MCF 10A (cell line): ENCODE measurements at regions of chr16 and their contacts with region 1.

Region 1: DNA sequence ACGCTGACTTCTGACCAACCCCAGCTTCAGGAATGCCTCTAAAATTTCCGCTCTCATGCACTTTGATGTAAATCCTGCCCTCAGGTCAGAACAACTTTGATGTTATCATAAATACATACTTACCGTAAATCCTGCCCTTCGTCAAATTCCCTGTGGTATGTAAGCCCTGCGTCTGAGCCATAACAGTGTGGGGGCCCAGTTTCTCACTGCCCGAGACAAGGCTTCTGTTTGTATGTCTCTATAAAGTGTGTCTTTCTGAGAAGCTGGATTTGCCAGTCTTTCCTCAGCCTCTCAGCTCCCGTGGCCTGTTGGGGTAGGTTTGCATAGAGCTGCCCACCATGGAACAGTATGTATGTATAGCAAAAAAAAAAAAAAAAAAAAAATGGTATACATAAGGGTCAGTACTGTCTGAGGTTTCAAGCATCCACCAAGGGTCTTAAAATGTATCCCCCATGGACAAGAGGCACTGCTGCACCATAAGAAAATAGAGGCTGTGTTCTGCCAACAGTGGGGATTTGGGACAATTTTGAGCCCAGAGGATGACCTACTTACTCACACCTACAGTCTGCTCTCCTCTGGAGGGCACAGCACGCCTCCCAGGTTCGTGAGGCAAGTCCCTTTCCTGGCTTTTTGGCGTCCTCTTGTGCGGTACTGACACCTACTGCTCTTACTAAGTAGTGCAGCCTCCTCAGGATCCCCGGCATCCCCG is 17.5 kb downstream of the PRMT7 start:
- DNase-seq: peak; percentile 88
- H3K4me3 Mint-ChIP-seq: no peak overlapping the region
- H3K27ac Mint-ChIP-seq: no peak overlapping the region
- H3K4me1 Mint-ChIP-seq: peaks cover 10% of the 10 kb centered on the region
- H3K27me3 Mint-ChIP-seq: no peaks in the 10 kb centered on the region
- CTCF ChIP-seq: peak; percentile 91

Region 2: GRCh38 chr16:68244903-68245853 is 83.1 kb before region 1 on chr16 and contains the start of gene PLA2G15:
- CTCF ChIA-PET with region 1: interaction called, 36 read pairs
- POLR2A ChIA-PET with region 1: no interaction called
- intact Hi-C with region 1: loop called (anchors 1 kb)
- DNase-seq: peak; percentile 93
- H3K4me3 Mint-ChIP-seq: peak within 1 kb of the TSS; percentile 83
- H3K27ac Mint-ChIP-seq: peak within 1 kb of the TSS; percentile 16
- H3K4me1 Mint-ChIP-seq: peaks cover 9% of the 10 kb centered on the region
- H3K27me3 Mint-ChIP-seq: no peaks in the 10 kb centered on the region
- CTCF ChIP-seq: no peak
- total RNA-seq, gene PLA2G15: 4.6 and 6.4 TPM in 2 replicates

Region 3: GRCh38 chr16:68251832-68252231 is 76.5 kb before region 1 on chr16:
- CTCF ChIA-PET with region 1: interaction called, 11 read pairs
- POLR2A ChIA-PET with region 1: no interaction called
- intact Hi-C with region 1: no loop called
- DNase-seq: no peak
- H3K4me3 Mint-ChIP-seq: no peak overlapping the region
- H3K27ac Mint-ChIP-seq: no peak overlapping the region
- H3K4me1 Mint-ChIP-seq: peaks cover under 1% of the 10 kb centered on the region
- H3K27me3 Mint-ChIP-seq: no peaks in the 10 kb centered on the region
- CTCF ChIP-seq: no peak

Region 4: GRCh38 chr16:68257906-68258800 is 70.2 kb before region 1 on chr16:
- CTCF ChIA-PET with region 1: interaction called, 308 read pairs
- POLR2A ChIA-PET with region 1: interaction called, 21 read pairs
- intact Hi-C with region 1: loop called (anchors 1 kb)
- DNase-seq: peak; percentile 67
- H3K4me3 Mint-ChIP-seq: no peak overlapping the region
- H3K27ac Mint-ChIP-seq: peak overlapping the region; percentile 14
- H3K4me1 Mint-ChIP-seq: peaks cover 10% of the 10 kb centered on the region
- H3K27me3 Mint-ChIP-seq: no peaks in the 10 kb centered on the region
- CTCF ChIP-seq: no peak

Region 5: DNA sequence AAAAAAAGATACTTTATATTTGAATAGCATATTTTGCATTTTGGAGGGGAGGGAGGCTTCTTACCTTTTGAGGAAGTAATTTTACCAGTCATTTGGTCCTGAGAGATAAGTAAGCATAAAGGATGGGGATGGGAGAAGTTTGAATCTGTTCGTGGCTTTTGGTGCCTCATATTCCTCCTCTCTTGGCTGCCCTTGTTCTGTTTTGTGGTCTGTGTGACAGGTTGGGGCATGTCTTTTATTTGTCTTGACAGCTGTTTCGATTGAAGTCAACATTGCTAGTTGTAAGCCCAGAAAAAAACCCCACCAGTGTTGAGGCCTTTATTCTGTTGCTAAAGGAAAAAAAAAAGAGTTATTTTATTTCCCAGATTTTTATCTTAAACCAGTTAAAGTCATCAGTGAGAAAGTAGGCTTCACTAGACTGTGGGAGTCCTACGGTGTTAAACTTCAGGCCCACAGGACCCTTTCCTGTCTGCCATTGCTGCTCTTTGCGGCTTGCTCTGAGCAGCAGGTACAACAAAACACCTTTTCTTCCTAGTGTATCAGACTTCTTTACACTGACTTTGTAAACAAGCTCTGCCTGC is 52.6 kb before region 1 on chr16:
- CTCF ChIA-PET with region 1: interaction called, 12 read pairs
- POLR2A ChIA-PET with region 1: interaction called, 3 read pairs
- intact Hi-C with region 1: no loop called
- DNase-seq: peak; percentile 71
- H3K4me3 Mint-ChIP-seq: no peak overlapping the region
- H3K27ac Mint-ChIP-seq: peak overlapping the region; percentile 77
- H3K4me1 Mint-ChIP-seq: peaks cover 20% of the 10 kb centered on the region
- H3K27me3 Mint-ChIP-seq: no peaks in the 10 kb centered on the region
- CTCF ChIP-seq: no peak

Region 6: DNA sequence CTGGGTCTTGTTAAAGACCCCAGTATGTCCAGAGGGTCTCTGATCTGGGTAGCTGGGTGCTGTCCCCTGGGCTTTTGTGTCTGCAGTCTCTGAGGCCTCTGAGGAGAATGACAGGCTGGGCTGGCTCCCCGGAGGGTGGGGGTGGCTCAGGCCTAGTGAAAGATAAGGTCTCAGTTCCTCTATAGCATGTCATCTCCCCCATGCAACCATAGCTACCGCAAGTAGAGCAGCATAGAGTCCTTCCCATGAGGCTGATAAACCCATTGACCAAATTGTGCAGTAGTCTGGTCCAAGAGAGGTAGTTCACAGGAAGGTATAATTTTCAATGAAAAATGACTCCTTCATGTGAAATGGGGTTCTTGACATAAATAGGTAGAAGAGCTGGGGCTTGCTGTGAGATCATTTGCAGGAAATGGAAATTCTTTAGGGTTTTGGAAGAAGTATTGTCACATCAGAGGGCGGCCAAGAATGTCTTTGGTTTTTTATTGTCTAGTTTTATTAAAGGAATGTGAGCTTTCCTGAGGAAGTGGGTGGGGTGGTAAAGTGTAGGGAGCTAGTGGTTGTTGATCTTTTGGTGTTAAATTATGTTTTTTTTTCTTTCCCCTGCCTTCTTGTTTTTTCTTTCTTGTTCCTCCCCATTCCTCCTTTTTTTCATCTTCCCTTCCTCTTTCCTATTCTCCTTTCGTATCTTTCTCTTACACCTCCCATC is 38.5 kb before region 1 on chr16:
- CTCF ChIA-PET with region 1: interaction called, 14 read pairs
- POLR2A ChIA-PET with region 1: no interaction called
- intact Hi-C with region 1: no loop called
- DNase-seq: no peak
- H3K4me3 Mint-ChIP-seq: no peak overlapping the region
- H3K27ac Mint-ChIP-seq: no peak overlapping the region
- H3K4me1 Mint-ChIP-seq: peaks cover 23% of the 10 kb centered on the region
- H3K27me3 Mint-ChIP-seq: no peaks in the 10 kb centered on the region
- CTCF ChIP-seq: no peak

Region 7: DNA sequence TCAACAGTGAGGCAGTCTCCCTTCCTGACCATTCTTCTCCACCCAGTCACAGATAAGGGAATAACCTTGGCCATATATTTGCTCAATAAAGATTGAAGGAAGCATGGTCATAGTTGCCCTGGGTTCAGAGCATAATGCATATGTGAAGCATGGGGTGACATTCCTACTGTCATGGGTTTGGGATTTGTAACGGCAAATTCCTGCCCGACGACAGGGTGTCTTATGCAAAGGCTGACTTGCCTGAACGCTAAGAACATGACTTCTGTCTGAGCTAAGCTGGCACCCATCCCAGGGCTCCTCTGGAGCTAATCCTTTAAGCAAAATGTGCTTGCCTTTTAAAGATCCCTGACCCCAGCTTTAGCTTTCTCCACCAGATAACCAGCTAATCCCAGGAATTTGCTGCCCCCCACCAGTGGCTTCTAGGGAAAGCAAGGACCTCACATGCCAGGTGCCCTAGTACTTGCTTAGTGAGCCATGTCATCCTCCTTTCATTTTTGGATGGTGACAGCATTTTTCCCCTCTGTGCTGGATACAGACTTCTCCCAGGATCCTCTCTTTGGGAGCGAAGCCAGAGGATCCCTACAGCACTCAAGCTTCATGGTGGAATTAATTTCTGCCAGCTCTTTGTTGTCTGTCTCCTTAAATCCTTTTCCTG is 29.3 kb before region 1 on chr16:
- CTCF ChIA-PET with region 1: interaction called, 12 read pairs
- POLR2A ChIA-PET with region 1: interaction called, 5 read pairs
- intact Hi-C with region 1: no loop called
- DNase-seq: peak; percentile 50
- H3K4me3 Mint-ChIP-seq: no peak overlapping the region
- H3K27ac Mint-ChIP-seq: peak overlapping the region; percentile 39
- H3K4me1 Mint-ChIP-seq: no peaks in the 10 kb centered on the region
- H3K27me3 Mint-ChIP-seq: no peaks in the 10 kb centered on the region
- CTCF ChIP-seq: no peak

Region 8: DNA sequence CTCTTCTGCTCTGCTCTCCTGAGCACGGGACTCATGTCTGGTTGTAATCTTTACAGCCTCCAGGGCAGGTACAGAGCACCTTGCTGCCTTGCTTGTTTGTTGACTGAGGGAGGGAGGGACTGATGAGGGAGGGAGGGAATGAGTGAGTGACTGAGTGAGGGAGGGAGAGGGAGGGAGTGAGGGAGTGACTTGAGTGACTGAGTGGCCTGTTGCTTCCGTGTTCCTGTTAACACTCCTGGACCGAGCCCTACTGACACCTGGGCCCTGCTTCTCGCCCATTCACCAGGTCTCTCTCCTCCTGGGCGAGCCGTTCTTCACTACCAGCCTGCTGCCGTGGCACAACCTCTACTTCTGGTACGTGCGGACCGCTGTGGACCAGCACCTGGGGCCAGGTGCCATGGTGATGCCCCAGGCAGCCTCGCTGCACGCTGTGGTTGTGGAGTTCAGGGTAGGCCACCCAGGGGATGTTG is 23.7 kb after region 1 on chr16:
- CTCF ChIA-PET with region 1: no interaction called
- POLR2A ChIA-PET with region 1: no interaction called
- intact Hi-C with region 1: no loop called
- DNase-seq: no peak
- H3K4me3 Mint-ChIP-seq: no peak overlapping the region
- H3K27ac Mint-ChIP-seq: no peak overlapping the region
- H3K4me1 Mint-ChIP-seq: no peaks in the 10 kb centered on the region
- H3K27me3 Mint-ChIP-seq: no peaks in the 10 kb centered on the region
- CTCF ChIP-seq: no peak

Region 9: DNA sequence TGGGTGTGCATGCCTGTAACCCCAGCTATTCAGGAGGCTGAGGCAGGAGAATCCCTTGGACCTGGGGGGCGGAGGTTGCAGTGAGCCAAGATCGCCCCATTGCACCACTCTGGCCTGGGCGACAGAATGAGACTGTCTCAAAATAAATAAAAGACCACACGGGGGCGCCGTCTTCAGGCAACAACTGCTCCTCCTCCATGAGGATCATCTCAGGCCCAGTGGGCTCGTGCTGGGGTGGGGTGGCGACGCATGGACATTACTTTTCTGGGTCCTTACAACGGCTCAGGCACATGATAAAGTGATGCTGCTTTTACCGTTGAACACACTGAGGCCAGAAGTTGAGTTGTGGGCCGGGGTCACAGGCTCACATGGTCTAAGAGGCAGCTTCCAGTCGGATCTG is 38.7 kb after region 1 on chr16:
- CTCF ChIA-PET with region 1: no interaction called
- POLR2A ChIA-PET with region 1: no interaction called
- intact Hi-C with region 1: no loop called
- DNase-seq: peak; percentile 57
- H3K4me3 Mint-ChIP-seq: no peak overlapping the region
- H3K27ac Mint-ChIP-seq: no peak overlapping the region
- H3K4me1 Mint-ChIP-seq: peaks cover 5% of the 10 kb centered on the region
- H3K27me3 Mint-ChIP-seq: peaks cover 15% of the 10 kb centered on the region
- CTCF ChIP-seq: peak; percentile 32